Activated T-helper 2 cell treated with anti-CD3 and anti-CD28 coated beads, Interferon-gamma antibody, Interleukin-2, Interleukin-4, amounts not matched to agents 10 μg/mL and 5 μg/mL and 100 μg/mL, durations not matched to agents 14 hours and 24 hours and 36 hours (primary cell): ENCODE measurements at regions of chr9 and their contacts with region 1.

Region 1: DNA sequence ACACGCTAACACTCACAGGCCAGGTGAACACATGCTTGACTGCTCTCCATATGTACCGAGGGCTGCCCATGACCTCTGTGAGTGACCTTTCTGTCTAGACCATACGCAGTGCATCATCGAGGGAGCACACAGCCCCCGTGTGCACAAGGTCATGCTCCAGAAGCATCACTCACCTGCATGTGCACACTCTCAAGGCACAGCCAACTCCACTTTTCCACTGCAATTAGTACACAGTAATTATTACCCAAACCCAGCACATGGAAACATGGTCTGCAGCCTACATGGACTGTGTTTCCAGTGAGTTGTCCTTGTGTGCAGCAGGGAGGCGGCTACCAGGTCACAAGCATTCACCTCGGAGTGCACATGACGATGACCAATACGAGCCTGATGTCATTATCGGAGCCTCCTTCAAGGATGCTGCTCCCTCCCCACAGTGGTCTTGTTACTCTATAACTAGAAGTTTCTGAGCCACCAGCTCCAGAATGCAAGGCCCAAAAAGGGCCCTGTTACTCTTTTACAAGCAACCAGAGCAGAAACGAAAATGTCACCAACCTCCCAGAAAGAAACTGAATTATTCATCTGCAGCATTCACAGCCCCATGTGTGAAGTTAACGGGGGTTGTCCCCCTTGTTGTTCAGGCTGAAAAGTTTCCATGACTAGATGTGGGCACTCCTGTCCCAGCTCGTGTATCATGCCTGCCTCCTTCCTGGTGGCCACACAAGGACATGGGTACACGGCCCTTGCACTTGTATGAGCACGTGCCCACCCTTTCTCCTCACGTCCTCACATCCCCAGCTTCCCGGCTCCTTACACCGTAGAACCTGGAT is 31.2 kb downstream of the SEMA4D start:
- DNase-seq: no peak
- H3K4me3 Mint-ChIP-seq: peak overlapping the region; percentile 30
- H3K27ac Mint-ChIP-seq: peak overlapping the region; percentile 99
- H3K4me1 Mint-ChIP-seq: peaks cover 93% of the 10 kb centered on the region
- H3K27me3 Mint-ChIP-seq: no peaks in the 10 kb centered on the region

Region 2: GRCh38 chr9:89318123-89319014 is 148.3 kb before region 1 on chr9 and contains the start of gene SECISBP2:
- intact Hi-C with region 1: loop called (anchors 2 kb)
- DNase-seq: peak; percentile 94
- H3K4me3 Mint-ChIP-seq: peak within 1 kb of the TSS; percentile 88
- H3K27ac Mint-ChIP-seq: peak within 1 kb of the TSS; percentile 98
- H3K4me1 Mint-ChIP-seq: peaks cover 78% of the 10 kb centered on the region
- H3K27me3 Mint-ChIP-seq: no peaks in the 10 kb centered on the region
- total RNA-seq, gene SECISBP2: 51.3 and 53.5 TPM in 2 replicates

Region 3: GRCh38 chr9:89418882-89419640 is 47.6 kb before region 1 on chr9:
- intact Hi-C with region 1: loop called (anchors 1 kb)
- DNase-seq: peak; percentile 72
- H3K4me3 Mint-ChIP-seq: peak overlapping the region; percentile 81
- H3K27ac Mint-ChIP-seq: peak overlapping the region; percentile 90
- H3K4me1 Mint-ChIP-seq: peaks cover 82% of the 10 kb centered on the region
- H3K27me3 Mint-ChIP-seq: no peaks in the 10 kb centered on the region

Region 4: DNA sequence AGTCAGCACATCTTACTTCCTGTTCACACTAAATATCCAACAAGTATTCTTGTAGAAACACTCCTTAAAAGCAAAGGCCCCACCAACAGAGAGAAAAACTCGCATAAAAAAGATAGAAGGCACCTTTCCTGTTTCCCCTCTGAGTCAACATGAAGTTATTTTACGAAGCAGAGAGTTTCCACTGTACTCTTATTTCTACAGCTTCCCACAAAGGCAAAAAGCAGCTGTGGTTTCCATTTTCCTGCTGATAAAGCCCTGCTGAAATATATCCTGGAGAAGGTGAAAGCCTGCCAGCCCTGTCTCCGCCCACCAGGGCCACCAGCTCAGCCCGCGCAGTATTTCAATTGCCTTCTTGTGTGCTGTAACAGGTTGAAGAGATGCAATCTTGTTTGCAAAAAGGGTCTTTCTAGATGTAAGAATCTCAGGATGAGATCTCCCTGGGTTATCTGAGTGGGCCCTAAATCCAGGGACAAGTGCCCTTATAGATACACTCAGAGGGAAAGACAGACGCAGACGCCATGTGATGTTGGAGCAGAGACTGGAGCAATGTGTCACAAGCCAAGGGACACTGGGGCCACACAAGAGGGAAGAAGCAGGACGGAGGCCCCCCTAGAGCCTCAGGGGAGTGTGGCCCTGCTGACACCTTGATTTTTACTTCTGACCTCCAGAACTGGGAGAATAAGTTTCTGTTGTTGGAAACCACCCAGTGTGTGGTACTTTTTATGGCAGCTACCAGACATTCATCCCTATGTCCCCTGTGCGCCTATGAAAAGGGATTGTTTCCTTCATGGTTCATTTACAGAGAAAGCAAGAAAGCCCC is 11.4 kb after region 1 on chr9:
- intact Hi-C with region 1: loop called (anchors 1 kb)
- DNase-seq: peak; percentile 65
- H3K4me3 Mint-ChIP-seq: peak overlapping the region; percentile 83
- H3K27ac Mint-ChIP-seq: peak overlapping the region; percentile 97
- H3K4me1 Mint-ChIP-seq: peaks cover 78% of the 10 kb centered on the region
- H3K27me3 Mint-ChIP-seq: no peaks in the 10 kb centered on the region

Region 5: DNA sequence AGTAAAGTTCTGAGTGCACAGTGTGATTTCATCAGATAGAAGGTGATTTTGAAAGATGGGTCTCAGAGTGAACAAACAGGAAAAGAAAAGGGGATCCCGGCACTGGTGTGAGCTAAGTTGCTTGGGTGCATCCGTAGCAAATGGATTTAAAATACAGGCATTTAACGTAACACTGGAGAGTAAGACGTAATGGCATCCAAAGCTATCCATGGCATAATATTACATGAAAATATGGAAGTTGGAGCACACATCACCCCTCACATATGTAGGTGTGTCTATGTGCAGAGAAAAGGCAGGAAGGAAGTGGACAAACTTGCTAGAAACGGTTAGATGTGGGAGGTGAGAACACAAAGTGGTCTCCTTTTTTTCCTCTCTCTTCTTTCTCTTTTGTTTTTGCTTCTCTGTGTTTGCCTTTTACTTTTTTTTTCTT is 69.5 kb after region 1 on chr9:
- intact Hi-C with region 1: loop called (anchors 5 kb)
- DNase-seq: peak; percentile 33
- H3K4me3 Mint-ChIP-seq: peak overlapping the region; percentile 62
- H3K27ac Mint-ChIP-seq: peak overlapping the region; percentile 87
- H3K4me1 Mint-ChIP-seq: peaks cover 75% of the 10 kb centered on the region
- H3K27me3 Mint-ChIP-seq: no peaks in the 10 kb centered on the region